GM13976 (cell line): ENCODE measurements at regions of chr10 and their contacts with region 1.

Region 1: GRCh38 chr10:71888623-71889387 is 37.8 kb upstream of the PSAP start:
- DNase-seq: peak; percentile 88
- CTCF ChIP-seq: peak; percentile 24

Region 2: GRCh38 chr10:71835671-71836595 is 52.9 kb before region 1 on chr10:
- in situ Hi-C with region 1: loop called (anchors 10 kb)
- DNase-seq: peak; percentile 90
- CTCF ChIP-seq: no peak